Ovary (tissue), 10 donors: ENCODE measurements at regions of chr18 and their contacts with region 1.

Region 1: GRCh38 chr18:23377669-23378301 is 75.3 kb upstream of the RIOK3 start:
- DNase-seq: peak in 1 of 5 donors; percentile 24
- H3K4me3 ChIP-seq: no peak overlapping the region
- H3K27ac ChIP-seq: peak overlapping the region in 1 of 2 donors; percentile 65
- H3K4me1 ChIP-seq: peaks cover 7% of the 10 kb centered on the region
- H3K27me3 ChIP-seq: no peaks in the 10 kb centered on the region
- CTCF ChIP-seq: no peak
- EP300 ChIP-seq: no peak
- POLR2A ChIP-seq: no peak

Region 2: DNA sequence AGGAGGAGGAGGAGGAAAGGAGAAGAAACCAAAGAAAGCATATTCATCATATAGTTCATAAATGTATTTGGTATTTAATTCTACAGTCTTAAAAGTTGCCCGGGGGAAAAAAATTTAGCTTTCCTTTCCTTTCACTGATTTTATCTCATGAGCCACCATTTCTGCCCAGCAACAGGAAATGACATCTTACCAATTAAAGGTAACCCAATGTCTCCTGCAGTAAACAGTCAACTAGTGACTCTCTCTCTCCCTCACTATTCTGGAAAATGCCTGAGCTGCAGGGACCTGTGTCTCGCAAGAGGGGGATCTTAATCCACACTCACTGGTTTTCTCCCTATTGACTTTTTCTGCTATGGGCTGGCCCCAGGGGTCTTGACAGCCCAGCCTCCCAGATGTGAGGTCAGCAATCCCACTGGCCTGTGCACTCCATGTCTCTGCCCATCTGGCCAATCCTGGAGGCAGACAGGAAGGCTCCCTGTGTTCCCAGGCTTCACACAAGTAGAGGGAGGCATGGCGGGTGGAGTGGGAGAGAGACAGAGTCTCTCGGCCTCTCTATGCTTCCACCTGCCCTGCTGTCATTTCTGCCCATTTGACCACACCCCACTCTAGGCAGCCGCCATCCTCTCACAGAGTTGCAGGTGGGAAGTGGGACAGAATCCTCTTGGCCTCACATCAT is 327.9 kb before region 1 on chr18:
- intact Hi-C with region 1: loop called in 1 of 4 experiments (anchors 10 kb)
- DNase-seq: no peak
- H3K4me3 ChIP-seq: no peak overlapping the region
- H3K27ac ChIP-seq: no peak overlapping the region
- H3K4me1 ChIP-seq: no peaks in the 10 kb centered on the region
- H3K27me3 ChIP-seq: no peaks in the 10 kb centered on the region
- CTCF ChIP-seq: no peak
- EP300 ChIP-seq: no peak
- POLR2A ChIP-seq: no peak